SK-N-SH (cell line): ENCODE measurements at regions of chr6 and their contacts with region 1.

Region 1: DNA sequence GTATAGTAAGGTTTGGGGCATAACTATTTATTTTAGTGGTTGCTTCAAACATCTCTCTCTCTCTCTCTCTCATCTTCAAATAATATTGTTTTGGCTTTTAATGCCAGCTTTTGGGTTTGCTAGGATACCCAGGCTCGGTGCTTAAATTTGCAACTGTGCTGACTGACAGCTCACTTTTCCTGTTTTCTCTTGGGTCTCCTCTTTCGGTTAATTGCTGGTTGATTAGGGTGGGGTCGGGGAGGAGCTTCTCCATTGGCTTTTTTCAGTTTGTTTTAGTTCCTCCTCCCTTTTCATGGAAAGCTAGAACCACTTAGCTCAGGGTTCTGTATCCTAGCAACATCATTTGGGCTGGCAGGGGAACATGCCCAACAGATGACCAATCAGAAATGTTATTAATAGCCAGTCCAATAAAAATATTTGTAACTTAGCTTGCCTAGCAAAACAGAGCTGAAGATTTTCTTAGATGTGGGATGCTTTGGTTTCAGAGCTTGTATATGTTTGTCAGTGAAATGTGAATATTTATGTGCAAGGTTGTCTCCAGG is 11.3 kb downstream of the TFAP2B start:
- DNase-seq: no peak
- H3K4me3 ChIP-seq: no peak overlapping the region; a peak in 1 of 4 replicates
- H3K27ac ChIP-seq: peak overlapping the region in 1 of 2 experiments; percentile 99; a peak in 2 of 4 replicates
- H3K4me1 ChIP-seq: peaks cover 0 to 51% of the 10 kb centered on the region in 2 experiments; a peak in 2 of 4 replicates
- H3K27me3 ChIP-seq: peaks cover 20% of the 10 kb centered on the region
- CTCF ChIP-seq: no peak
- EP300 ChIP-seq: no peak
- RAD21 ChIP-seq: no peak

Region 2: GRCh38 chr6:50843842-50844241 is 13.9 kb after region 1 on chr6:
- CTCF ChIA-PET with region 1: interaction called, 11 read pairs
- POLR2A ChIA-PET with region 1: interaction called, 10 read pairs
- DNase-seq: no peak
- H3K4me3 ChIP-seq: no peak overlapping the region
- H3K27ac ChIP-seq: no peak overlapping the region
- H3K4me1 ChIP-seq: peaks cover 0 to 17% of the 10 kb centered on the region in 2 experiments; a peak in 2 of 4 replicates
- H3K27me3 ChIP-seq: no peaks in the 10 kb centered on the region; the same call in 1 of the 2 replicates
- CTCF ChIP-seq: no peak
- EP300 ChIP-seq: no peak
- RAD21 ChIP-seq: no peak

Region 3: DNA sequence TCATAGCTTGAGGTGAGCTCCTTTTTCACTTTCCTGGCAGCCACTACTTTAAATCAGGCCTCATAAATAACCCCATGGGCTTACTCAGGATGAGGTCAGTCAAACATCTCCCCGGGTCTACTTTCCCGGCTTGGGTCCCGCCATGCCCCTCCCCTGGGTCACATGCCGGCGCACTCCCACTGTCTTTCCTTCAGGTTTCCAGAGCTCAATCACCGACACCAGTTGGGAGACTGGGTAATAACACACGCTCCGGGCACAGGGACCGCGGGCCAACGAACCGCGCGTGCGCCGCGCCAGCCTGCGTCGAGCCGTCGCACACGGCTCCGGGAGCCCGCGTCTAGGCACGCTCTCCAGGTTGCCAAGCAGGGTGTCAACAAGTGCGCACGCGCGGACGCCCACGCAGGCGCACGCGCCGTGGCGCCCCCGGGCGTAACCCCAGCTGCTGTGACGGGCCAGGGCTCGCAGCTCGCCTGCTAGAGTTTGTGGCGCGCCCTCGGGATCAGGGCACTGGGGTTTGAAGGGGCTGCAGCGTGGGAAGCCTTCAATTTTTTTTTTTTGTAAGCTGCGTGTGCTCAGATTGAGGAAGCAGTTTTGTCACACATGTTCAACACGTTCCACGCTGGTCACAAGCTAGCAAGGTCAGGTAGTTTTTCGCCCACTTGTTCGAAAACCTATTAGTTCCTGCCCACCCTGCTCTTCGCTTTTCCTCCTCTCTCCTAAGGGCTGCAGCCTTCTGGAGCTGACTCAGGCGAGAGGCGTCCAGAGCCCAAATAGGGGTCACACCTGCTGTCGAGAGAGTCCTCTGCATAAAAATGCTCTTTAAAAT is 20.5 kb after region 1 on chr6:
- CTCF ChIA-PET with region 1: interaction called, 11 read pairs
- POLR2A ChIA-PET with region 1: interaction called, 10 read pairs
- DNase-seq: peak; percentile 93
- H3K4me3 ChIP-seq: peak overlapping the region; percentile 39 to 46; a peak in 3 of 4 replicates
- H3K27ac ChIP-seq: peak overlapping the region in 1 of 2 experiments; percentile 93; a peak in 2 of 4 replicates
- H3K4me1 ChIP-seq: peaks cover 0 to 23% of the 10 kb centered on the region in 2 experiments; a peak in 2 of 4 replicates
- H3K27me3 ChIP-seq: peaks cover 7% of the 10 kb centered on the region; the same call in 1 of the 2 replicates
- CTCF ChIP-seq: no peak
- EP300 ChIP-seq: no peak
- RAD21 ChIP-seq: no peak